Right cardiac atrium (tissue), 5 donors: ENCODE measurements at regions of chr2 and their contacts with region 1.

Region 1: DNA sequence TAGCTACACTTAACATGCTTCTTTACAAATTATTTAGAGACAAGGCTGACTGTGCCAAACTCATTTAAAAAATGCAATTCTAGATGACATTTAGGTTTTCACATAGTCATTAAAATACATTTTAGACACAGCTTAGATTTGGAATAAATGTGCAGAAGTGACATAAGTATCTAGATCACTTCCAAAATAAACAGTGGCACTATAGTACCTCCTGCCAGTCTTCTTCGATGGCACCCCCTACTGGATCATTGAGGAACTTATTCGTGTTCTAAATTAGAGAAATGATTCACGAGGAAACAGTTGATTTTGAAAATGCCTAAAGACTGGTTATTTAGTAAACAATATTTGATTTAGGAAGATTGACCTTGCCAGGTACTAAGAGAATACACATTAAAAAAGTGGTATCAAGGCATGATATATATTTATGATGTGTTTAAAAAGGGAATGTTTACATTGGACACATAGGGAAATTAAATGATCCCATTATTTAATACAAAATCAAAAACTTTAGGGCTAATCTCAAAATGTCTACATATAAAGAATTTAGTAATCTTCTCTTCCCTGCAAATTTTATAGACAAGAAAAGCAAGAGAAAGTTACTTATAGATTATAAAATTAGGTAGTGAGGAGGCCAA is 323.9 kb downstream of the XIRP2 start:
- DNase-seq: no peak
- ATAC-seq: peak; percentile 57 to 67
- H3K4me3 ChIP-seq: no peak overlapping the region
- H3K27ac ChIP-seq: no peak overlapping the region
- H3K4me1 ChIP-seq: no peaks in the 10 kb centered on the region
- H3K27me3 ChIP-seq: no peaks in the 10 kb centered on the region

Region 2: DNA sequence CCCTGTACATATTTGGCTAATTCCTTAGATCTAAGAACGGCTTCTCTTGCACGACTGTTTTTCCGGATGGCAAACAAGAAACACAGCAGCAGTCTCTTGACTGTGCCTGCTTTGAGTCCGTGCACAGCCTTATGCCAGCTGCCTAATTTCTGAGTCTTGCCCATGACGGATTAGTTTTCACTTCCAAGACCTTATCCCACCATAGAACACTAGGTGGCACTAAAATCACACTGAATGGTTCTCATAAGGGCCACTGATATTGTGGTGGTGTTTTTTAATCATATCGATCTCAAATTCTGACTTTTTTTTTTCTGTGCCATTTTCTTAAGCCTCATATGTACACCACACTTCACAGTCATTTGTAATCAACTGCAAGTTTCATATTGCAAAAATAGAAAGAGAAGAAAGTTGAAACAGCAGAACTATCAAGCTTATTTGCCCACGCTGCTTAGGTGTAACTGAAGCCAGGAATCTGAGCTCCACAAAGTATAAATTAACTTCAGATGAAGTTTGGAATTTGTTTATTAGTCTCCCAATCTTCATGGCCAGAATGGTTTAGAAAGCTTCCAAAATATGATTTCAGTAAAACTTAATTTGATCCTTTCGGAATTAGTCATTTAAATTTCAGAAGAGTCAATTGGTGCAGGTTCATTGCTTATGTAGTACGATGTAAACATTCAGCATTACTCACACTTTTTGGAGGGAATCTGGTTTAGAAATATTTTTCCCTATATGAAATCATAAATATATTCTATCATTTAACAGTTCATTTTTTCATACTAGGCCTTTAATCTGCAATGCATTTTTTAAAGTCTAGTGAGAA is 672.6 kb before region 1 on chr2:
- intact Hi-C with region 1: loop called in 2 of 4 experiments (anchors 10 kb)
- DNase-seq: no peak
- ATAC-seq: peak; percentile 73 to 79
- H3K4me3 ChIP-seq: no peak overlapping the region
- H3K27ac ChIP-seq: no peak overlapping the region
- H3K4me1 ChIP-seq: no peaks in the 10 kb centered on the region
- H3K27me3 ChIP-seq: no peaks in the 10 kb centered on the region

Region 3: DNA sequence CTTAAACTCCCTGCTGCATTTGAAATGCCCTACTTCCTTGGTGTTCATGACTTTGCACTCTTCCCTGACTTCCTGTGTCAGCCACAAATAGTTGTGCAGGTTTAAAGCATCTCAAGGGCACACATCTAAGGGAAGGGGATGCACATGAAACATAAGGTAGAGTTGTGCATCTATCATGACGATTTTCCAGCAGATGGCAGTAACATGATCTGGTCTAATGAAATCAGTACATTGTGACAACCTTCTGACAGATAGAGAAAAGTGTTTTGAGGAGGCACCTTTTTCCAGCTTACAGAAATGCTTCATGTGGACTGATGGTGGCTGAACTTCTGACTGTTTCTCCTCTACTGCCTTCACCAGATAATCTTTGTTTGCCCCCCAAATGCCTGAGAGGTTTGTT is 85.0 kb before region 1 on chr2:
- intact Hi-C with region 1: loop called (anchors 5 to 10 kb)
- DNase-seq: no peak
- ATAC-seq: peak in 1 of 2 donors; percentile 41
- H3K4me3 ChIP-seq: no peak overlapping the region
- H3K27ac ChIP-seq: no peak overlapping the region
- H3K4me1 ChIP-seq: no peaks in the 10 kb centered on the region
- H3K27me3 ChIP-seq: no peaks in the 10 kb centered on the region